ENCODE measurements at regions of chr4 and their contacts with region 1.

Region 1: DNA sequence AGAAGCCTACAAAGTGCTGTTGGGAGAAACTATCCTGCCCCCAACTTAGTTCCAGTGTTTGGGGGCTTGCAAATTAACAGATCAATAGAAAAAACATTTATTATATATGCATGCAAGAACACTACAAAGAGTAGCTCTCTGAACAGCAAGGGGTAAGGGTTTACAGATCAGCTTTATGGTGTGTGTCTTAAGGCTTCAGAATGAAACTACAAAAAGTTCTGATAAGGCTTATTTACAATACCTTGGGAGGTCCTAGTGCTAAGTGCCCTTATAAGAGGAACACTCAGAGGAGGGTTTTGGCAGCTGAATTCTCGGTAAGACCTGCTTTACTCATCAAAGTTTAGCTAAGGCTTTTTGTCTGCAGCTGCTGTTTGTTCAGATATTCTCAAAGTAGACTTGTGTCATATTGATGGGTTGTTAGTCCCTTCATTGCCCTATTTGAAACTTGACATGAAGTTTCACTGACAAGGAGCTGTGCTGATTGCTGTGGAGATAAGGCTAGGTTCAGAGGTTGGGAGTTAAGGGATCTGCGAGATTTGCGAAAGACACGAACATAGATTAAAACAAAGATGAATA is 7.7 kb downstream of the ERVMER34-1 start:
- DNase-seq: peak; percentile 62 to 68
- H3K4me3 ChIP-seq: no peak overlapping the region
- H3K4me3 Mint-ChIP-seq: peak overlapping the region; percentile 32
- H3K27ac Mint-ChIP-seq: peak overlapping the region; percentile 78
- H3K4me1 ChIP-seq: peaks cover 35% of the 10 kb centered on the region
- H3K4me1 Mint-ChIP-seq: peaks cover 30% of the 10 kb centered on the region
- H3K27me3 ChIP-seq: no peaks in the 10 kb centered on the region
- H3K27me3 Mint-ChIP-seq: no peaks in the 10 kb centered on the region
- CTCF ChIP-seq: no peak

Region 2: GRCh38 chr4:52712172-52712990 is 31.2 kb before region 1 on chr4:
- CTCF ChIA-PET with region 1: no interaction called
- POLR2A ChIA-PET with region 1: interaction called, 10 read pairs
- intact Hi-C with region 1: no loop called
- DNase-seq: peak; percentile 98 to 99
- H3K4me3 ChIP-seq: peak overlapping the region; percentile 73
- H3K4me3 Mint-ChIP-seq: peak overlapping the region; percentile 88
- H3K27ac Mint-ChIP-seq: peak overlapping the region; percentile 93
- H3K4me1 ChIP-seq: peaks cover 11% of the 10 kb centered on the region
- H3K4me1 Mint-ChIP-seq: peaks cover 12% of the 10 kb centered on the region
- H3K27me3 ChIP-seq: no peaks in the 10 kb centered on the region
- H3K27me3 Mint-ChIP-seq: peaks cover 3% of the 10 kb centered on the region
- CTCF ChIP-seq: no peak

Region 3: GRCh38 chr4:52894443-52894842 is 150.9 kb after region 1 on chr4:
- CTCF ChIA-PET with region 1: no interaction called
- POLR2A ChIA-PET with region 1: no interaction called
- intact Hi-C with region 1: no loop called
- DNase-seq: no peak
- H3K4me3 ChIP-seq: no peak overlapping the region
- H3K4me3 Mint-ChIP-seq: no peak overlapping the region
- H3K27ac Mint-ChIP-seq: no peak overlapping the region
- H3K4me1 ChIP-seq: no peaks in the 10 kb centered on the region
- H3K4me1 Mint-ChIP-seq: no peaks in the 10 kb centered on the region
- H3K27me3 ChIP-seq: no peaks in the 10 kb centered on the region
- H3K27me3 Mint-ChIP-seq: no peaks in the 10 kb centered on the region
- CTCF ChIP-seq: no peak